ENCODE measurements at regions of chr1 and their contacts with region 1.

Region 1: DNA sequence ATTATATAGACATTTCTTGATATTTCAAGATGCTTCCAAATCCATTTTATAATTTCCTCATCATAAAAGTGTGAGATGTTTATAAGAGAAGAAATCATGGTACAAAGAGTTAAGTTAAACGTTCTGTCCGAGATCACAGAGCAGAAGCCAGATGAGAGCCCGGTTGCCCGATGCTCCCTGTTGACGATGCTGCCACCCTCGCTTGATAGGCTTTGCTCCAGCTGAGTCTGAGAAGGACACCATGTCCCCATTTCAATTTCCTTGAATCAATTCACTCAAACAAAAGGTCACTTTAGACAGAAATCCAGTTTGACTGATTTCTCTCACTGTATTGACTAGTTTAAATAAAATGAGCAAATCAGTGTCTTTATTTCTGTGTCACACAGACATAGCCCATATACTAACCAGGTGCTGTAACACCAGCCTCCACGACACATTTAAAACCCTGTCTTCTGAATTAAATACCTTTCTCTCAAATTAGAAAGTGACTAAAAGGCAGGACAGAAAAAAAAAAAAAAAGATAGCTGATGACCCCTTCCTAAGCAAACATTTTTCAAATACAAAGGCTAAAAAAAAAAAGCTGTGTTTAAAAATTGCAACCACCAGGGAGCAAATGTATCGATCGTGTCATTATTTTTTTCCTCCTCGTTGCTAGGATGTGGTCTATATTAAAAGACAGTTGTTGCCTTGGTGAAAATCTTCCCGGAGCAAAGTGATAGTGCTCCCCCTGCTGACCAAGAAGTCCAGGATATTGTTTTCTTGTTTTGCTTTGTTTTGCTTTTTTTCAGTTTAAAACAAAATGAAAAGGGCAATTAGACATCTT is 35.2 kb downstream of the DNASE2B start:
- DNase-seq: peak in 8 of 10 donors; percentile 34 to 67 (median 54)
- H3K4me3 ChIP-seq: peak overlapping the region; percentile 30 to 70 (median 53)
- H3K27ac ChIP-seq: peak overlapping the region in 58 of 59 donors; percentile 12 to 88 (median 74)
- H3K27me3 ChIP-seq: no peaks in the 10 kb centered on the region
- CTCF ChIP-seq: peak; percentile 75 to 98 (median 88)

Region 2: GRCh38 chr1:83931658-83932253 is 501.7 kb before region 1 on chr1:
- intact Hi-C with region 1: loop called in 1 of 2 experiments (anchors 10 kb)
- DNase-seq: peak in 1 of 10 donors; percentile 14
- H3K4me3 ChIP-seq: no peak overlapping the region
- H3K27ac ChIP-seq: peak overlapping the region in 57 of 59 donors; percentile 21 to 87 (median 74)
- H3K27me3 ChIP-seq: no peaks in the 10 kb centered on the region
- CTCF ChIP-seq: peak; percentile 41 to 88 (median 76)

Region 3: DNA sequence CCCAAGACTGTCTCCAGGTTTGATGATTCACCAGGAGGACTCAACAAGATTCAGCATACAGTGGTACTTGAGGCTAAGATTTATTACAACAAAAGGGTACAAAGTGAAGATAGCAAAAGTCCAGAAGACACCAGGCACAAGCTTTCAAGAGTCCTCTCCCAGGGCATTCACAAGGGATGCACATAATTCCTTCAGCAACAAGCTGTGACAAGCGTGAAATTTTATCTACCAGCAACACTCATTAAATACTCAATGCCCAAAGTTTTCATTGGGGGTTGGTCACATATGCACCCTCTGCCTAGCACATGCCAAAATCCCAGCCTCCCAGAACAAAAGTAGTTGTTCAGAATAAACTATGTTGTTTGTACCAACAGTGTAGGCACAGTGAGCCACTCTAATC is 227.1 kb before region 1 on chr1:
- intact Hi-C with region 1: no loop called
- DNase-seq: no peak
- H3K4me3 ChIP-seq: no peak overlapping the region
- H3K27ac ChIP-seq: peak overlapping the region in 20 of 59 donors; percentile 4 to 57 (median 24)
- H3K27me3 ChIP-seq: no peaks in the 10 kb centered on the region
- CTCF ChIP-seq: no peak

Region 4: GRCh38 chr1:84253891-84254290 is 179.6 kb before region 1 on chr1:
- intact Hi-C with region 1: loop called (anchors 5 kb)
- DNase-seq: peak; percentile 10 to 93 (median 85)
- H3K4me3 ChIP-seq: peak overlapping the region in 6 of 59 donors; percentile 3 to 49 (median 11)
- H3K27ac ChIP-seq: peak overlapping the region in 58 of 59 donors; percentile 10 to 95 (median 84)
- H3K27me3 ChIP-seq: no peaks in the 10 kb centered on the region
- CTCF ChIP-seq: peak in 6 of 56 donors; percentile 9 to 38 (median 16)

Region 5: DNA sequence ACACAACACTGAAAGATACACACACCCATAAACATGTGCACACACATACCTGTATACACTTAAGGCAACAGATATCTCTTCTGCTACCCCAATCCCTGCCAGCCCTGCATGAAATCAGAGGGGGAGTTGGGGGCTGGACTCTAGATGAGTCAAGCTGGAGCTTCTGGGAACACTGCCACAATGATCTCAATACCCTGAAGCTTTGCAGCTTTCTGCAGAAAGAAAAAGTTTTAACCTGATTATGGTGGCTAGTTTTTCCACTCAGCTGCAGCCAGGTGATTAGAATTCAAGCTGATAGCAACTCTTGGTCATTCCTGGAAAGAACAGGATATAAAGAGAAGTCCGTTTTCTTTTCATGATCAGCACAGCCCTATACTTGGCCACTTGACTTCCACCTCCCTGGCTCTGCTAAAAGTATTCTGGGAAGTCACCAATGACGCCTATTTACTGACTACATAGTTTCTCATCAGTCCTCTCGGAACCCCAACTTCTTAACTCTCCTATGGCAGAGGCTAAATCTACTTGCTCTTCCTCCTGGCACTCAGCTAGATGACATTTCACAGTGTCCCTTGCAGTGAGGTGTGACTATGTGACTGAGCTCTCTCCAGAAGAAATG is 55.9 kb before region 1 on chr1:
- intact Hi-C with region 1: loop called in 1 of 2 experiments (anchors 5 kb)
- DNase-seq: peak in 4 of 10 donors; percentile 17 to 55 (median 46)
- H3K4me3 ChIP-seq: no peak overlapping the region
- H3K27ac ChIP-seq: peak overlapping the region in 45 of 59 donors; percentile 5 to 90 (median 74)
- H3K27me3 ChIP-seq: no peaks in the 10 kb centered on the region
- CTCF ChIP-seq: no peak

Region 6: DNA sequence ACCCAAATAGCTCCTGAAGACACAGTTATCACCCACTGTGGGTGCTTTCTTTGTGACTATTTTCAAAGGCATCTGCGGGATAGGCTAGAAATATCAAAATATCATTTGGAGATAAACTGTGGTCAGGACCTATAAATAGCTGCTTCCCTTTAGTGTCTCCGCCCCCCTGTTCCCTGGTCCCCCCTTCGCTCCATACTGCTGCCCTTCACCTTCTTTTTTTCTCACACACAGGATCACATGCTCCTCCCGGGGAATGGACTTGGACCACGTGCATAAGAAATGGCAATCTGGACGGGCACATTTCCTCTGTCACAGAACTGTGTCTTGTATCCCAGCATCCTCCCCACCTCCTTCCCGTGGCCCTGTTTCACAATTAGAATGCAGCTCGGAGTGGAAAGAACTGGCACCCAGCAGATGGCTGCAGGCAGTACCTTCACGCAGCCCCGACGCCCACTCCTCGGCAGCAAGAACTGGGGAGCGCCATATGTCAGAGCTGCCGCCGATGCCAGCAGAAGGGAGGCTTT is 325.6 kb after region 1 on chr1:
- intact Hi-C with region 1: loop called in 1 of 2 experiments (anchors 2 kb)
- DNase-seq: peak; percentile 31 to 87 (median 76)
- H3K4me3 ChIP-seq: peak overlapping the region in 55 of 59 donors; percentile 2 to 65 (median 42)
- H3K27ac ChIP-seq: peak overlapping the region in 50 of 59 donors; percentile 4 to 90 (median 64)
- H3K27me3 ChIP-seq: no peaks in the 10 kb centered on the region
- CTCF ChIP-seq: no peak